ENCODE measurements at regions of chr11 and their contacts with region 1.

Region 1: DNA sequence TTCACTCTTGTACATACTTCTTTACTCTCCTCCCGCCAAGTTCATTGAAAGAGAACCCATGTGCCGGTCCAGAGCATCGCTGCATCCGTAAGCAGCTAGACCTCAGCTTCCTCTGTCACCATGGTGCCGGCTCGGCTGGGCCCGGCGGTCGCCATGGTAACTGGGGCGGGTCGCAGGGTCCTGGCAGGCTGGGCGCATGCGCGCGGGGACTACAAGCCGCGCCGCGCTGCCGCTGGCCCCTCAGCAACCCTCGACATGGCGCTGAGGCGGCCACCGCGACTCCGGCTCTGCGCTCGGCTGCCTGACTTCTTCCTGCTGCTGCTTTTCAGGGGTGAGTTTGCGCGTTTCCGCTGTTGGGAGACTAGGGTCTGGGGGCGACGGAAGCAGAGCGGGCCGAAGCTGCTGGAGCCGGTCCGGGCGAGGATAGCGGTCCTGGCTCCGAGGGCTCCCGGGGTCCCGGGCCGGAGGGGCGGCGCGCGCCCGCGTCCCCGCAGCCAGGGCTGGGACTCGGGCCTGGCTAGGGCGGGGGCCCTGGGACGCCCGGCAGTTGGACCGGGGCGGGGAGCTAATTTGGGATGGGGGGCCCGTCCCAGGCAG is at the start of gene JAM3:
- DNase-seq: peak; percentile 92 to 100 (median 98)

Region 2: GRCh38 chr11:133742353-133742752 is 326.6 kb before region 1 on chr11:
- intact Hi-C with region 1: no loop called
- DNase-seq: no peak

Region 3: GRCh38 chr11:134124660-134125451 is 55.9 kb after region 1 on chr11:
- intact Hi-C with region 1: loop called (anchors 2 kb)
- DNase-seq: peak; percentile 45 to 89 (median 78)